Activated CD8-positive, alpha-beta memory T cell treated with anti-CD3 and anti-CD28 coated beads, Interleukin-2, amount 10 ng/mL, durations not matched to agents 7 days and 5 days (primary cell): ENCODE measurements at regions of chr11 and their contacts with region 1.

Region 1: GRCh38 chr11:8006349-8006977 is 19.3 kb downstream of the EIF3F start:
- DNase-seq: peak; percentile 53
- ATAC-seq: peak; percentile 73
- H3K4me3 Mint-ChIP-seq: no peak overlapping the region
- H3K27ac Mint-ChIP-seq: no peak overlapping the region
- H3K4me1 Mint-ChIP-seq: no peaks in the 10 kb centered on the region
- H3K27me3 Mint-ChIP-seq: peaks cover 5% of the 10 kb centered on the region

Region 2: GRCh38 chr11:8018484-8019313 is 12.2 kb after region 1 on chr11:
- CTCF ChIA-PET with region 1: interaction called, 29 read pairs
- DNase-seq: peak; percentile 75
- ATAC-seq: peak; percentile 81
- H3K4me3 Mint-ChIP-seq: peak overlapping the region; percentile 55
- H3K27ac Mint-ChIP-seq: peak overlapping the region; percentile 60
- H3K4me1 Mint-ChIP-seq: peaks cover 14% of the 10 kb centered on the region
- H3K27me3 Mint-ChIP-seq: peaks cover 58% of the 10 kb centered on the region

Region 3: DNA sequence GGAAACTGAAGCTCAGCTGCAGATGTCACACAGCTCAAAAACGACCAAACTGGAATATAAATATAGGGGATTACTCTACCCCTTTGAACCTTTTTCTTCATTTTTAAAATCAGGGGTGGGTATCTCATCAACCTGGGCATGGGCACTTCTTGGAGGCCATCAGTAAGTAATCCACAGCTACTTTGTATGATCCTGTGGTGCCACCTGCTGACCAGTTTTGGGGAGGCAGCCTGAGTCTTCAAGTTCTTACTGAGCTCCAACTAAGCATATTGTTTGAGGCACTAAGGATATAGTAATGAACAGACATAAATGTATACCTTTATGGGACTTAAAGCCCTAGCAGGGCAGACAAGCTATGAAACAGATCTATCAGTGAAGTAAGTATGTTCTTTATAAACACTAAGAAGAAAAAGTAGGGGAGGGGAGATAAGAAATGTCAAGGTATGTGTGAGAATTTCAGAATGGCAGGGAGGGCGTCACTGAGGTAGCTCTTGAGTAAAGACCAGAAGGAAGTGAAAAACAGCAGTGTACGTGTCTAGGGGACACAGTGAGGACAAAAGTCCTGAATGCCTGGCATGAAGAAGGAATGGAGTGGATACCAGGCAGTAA is 92.9 kb after region 1 on chr11:
- CTCF ChIA-PET with region 1: interaction called, 210 read pairs
- DNase-seq: peak; percentile 80
- ATAC-seq: peak; percentile 78
- H3K4me3 Mint-ChIP-seq: no peak overlapping the region
- H3K27ac Mint-ChIP-seq: no peak overlapping the region
- H3K4me1 Mint-ChIP-seq: no peaks in the 10 kb centered on the region
- H3K27me3 Mint-ChIP-seq: no peaks in the 10 kb centered on the region